MCF 10A (cell line): ENCODE measurements at regions of chr1 and their contacts with region 1.

Region 1: GRCh38 chr1:89085781-89086180 is 20.8 kb upstream of the GBP1 start:
- DNase-seq: peak; percentile 73
- H3K4me3 Mint-ChIP-seq: no peak overlapping the region
- H3K27ac Mint-ChIP-seq: no peak overlapping the region
- H3K4me1 Mint-ChIP-seq: no peaks in the 10 kb centered on the region
- H3K27me3 Mint-ChIP-seq: no peaks in the 10 kb centered on the region
- CTCF ChIP-seq: peak; percentile 65

Region 2: GRCh38 chr1:89149229-89149628 is 63.4 kb after region 1 on chr1:
- CTCF ChIA-PET with region 1: interaction called, 12 read pairs
- POLR2A ChIA-PET with region 1: no interaction called
- intact Hi-C with region 1: loop called (anchors 2 kb)
- DNase-seq: no peak
- H3K4me3 Mint-ChIP-seq: no peak overlapping the region
- H3K27ac Mint-ChIP-seq: no peak overlapping the region
- H3K4me1 Mint-ChIP-seq: no peaks in the 10 kb centered on the region
- H3K27me3 Mint-ChIP-seq: no peaks in the 10 kb centered on the region
- CTCF ChIP-seq: no peak

Region 3: DNA sequence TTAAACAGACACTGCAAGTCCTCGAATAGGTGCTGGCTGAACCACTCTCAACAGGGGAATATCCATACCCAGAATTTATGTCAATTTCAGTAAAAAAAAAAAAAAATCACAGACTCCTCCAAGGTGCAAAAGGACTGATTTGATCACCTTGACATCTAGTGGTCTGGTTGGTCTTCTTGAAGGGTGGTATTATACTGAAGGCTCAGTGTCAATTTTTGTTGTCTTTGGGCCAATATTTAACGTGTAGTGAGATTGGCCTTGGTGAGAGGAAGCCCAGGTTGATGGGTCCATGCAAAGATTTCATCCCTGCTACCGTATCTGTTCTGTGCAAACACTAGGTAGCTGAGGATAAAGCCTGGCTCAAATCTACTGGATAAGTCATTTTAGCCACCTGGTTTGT is 190.9 kb after region 1 on chr1:
- CTCF ChIA-PET with region 1: interaction called, 3 read pairs
- POLR2A ChIA-PET with region 1: no interaction called
- intact Hi-C with region 1: loop called (anchors 1 kb)
- DNase-seq: peak; percentile 27
- H3K4me3 Mint-ChIP-seq: no peak overlapping the region
- H3K27ac Mint-ChIP-seq: no peak overlapping the region
- H3K4me1 Mint-ChIP-seq: peaks cover 11% of the 10 kb centered on the region
- H3K27me3 Mint-ChIP-seq: no peaks in the 10 kb centered on the region
- CTCF ChIP-seq: no peak

Region 4: GRCh38 chr1:89472952-89473351 is 387.2 kb after region 1 on chr1:
- CTCF ChIA-PET with region 1: no interaction called
- POLR2A ChIA-PET with region 1: no interaction called
- intact Hi-C with region 1: no loop called
- DNase-seq: no peak
- H3K4me3 Mint-ChIP-seq: no peak overlapping the region
- H3K27ac Mint-ChIP-seq: no peak overlapping the region
- H3K4me1 Mint-ChIP-seq: no peaks in the 10 kb centered on the region
- H3K27me3 Mint-ChIP-seq: peaks cover 18% of the 10 kb centered on the region
- CTCF ChIP-seq: no peak